GM12878 (cell line): ENCODE measurements at regions of chr10 and their contacts with region 1.

Region 1: GRCh38 chr10:70903262-70903921 is 15.0 kb upstream of the PCBD1 start:
- DNase-seq: no peak
- ATAC-seq: peak; percentile 64
- H3K4me3 ChIP-seq: no peak overlapping the region
- H3K27ac ChIP-seq: no peak overlapping the region
- H3K4me1 ChIP-seq: no peaks in the 10 kb centered on the region
- H3K27me3 ChIP-seq: peaks cover 2% of the 10 kb centered on the region in 2 experiments; a peak in 1 of 4 replicates
- CTCF ChIP-seq: peak; percentile 76 to 87 (median 82)
- EP300 ChIP-seq: no peak
- POLR2A ChIP-seq: no peak
- RAD21 ChIP-seq: peak; percentile 78

Region 2: DNA sequence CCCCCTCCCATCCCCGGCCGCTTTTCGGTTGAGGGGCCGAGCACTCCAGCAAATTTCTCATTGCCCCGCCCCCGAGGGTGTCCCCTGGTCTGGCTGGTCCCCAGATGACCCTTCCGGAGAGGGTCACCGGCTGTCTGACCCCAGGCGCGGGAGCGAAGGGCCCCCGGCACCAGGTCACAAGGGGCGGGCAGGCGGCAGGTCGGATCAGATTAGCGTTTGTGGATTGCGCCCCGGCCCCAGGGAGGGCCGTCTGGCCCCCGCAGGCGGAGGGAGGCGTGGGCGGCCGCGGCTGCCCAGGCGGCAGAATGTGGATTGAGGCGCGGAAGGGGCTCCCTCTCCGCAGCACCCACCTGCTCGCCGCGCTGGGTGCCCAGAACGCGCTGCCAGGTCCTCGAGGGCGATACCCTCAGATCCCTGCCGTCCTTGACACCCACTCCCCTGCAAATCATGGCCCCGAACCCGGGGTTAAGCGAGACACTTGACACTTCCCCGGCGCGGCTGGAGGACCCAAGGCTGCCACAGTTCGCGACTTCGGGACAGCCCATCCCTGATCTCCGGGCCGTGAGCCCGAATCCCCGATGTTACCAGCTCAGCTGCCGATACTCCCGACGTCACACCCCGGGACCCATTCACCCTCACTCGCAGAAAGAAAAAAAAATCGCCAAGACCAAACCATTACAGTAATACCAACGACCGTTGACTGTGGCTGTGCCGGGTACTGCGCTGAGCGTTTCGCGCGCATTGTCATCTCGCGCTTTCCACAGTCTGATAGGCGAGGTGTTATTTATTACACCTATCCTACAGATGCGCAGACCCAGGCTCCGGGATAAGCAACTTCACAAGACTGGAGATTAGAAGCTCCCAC is 462.9 kb before region 1 on chr10:
- CTCF ChIA-PET with region 1: no interaction called
- POLR2A ChIA-PET with region 1: no interaction called
- RAD21 ChIA-PET with region 1: no interaction called
- SMC1A ChIA-PET with region 1: no interaction called
- in situ Hi-C with region 1: no loop called
- intact Hi-C with region 1: no loop called
- DNase-seq: no peak
- ATAC-seq: no peak
- H3K4me3 ChIP-seq: no peak overlapping the region
- H3K27ac ChIP-seq: no peak overlapping the region
- H3K4me1 ChIP-seq: no peaks in the 10 kb centered on the region
- H3K27me3 ChIP-seq: peaks cover 13 to 18% of the 10 kb centered on the region in 2 experiments
- CTCF ChIP-seq: no peak
- EP300 ChIP-seq: no peak
- POLR2A ChIP-seq: no peak
- RAD21 ChIP-seq: no peak

Region 3: GRCh38 chr10:70931168-70931815 is 27.9 kb after region 1 on chr10:
- CTCF ChIA-PET with region 1: interaction called, 11 read pairs
- POLR2A ChIA-PET with region 1: no interaction called
- RAD21 ChIA-PET with region 1: no interaction called
- SMC1A ChIA-PET with region 1: no interaction called
- in situ Hi-C with region 1: no loop called
- intact Hi-C with region 1: no loop called
- DNase-seq: no peak
- ATAC-seq: no peak
- H3K4me3 ChIP-seq: no peak overlapping the region
- H3K27ac ChIP-seq: no peak overlapping the region
- H3K4me1 ChIP-seq: no peaks in the 10 kb centered on the region
- H3K27me3 ChIP-seq: peaks cover 0 to 4% of the 10 kb centered on the region in 2 experiments; a peak in 3 of 4 replicates
- CTCF ChIP-seq: no peak
- EP300 ChIP-seq: no peak
- POLR2A ChIP-seq: no peak
- RAD21 ChIP-seq: no peak